Mammary epithelial cell (primary cell): ENCODE measurements at regions of chr17 and their contacts with region 1.

Region 1: DNA sequence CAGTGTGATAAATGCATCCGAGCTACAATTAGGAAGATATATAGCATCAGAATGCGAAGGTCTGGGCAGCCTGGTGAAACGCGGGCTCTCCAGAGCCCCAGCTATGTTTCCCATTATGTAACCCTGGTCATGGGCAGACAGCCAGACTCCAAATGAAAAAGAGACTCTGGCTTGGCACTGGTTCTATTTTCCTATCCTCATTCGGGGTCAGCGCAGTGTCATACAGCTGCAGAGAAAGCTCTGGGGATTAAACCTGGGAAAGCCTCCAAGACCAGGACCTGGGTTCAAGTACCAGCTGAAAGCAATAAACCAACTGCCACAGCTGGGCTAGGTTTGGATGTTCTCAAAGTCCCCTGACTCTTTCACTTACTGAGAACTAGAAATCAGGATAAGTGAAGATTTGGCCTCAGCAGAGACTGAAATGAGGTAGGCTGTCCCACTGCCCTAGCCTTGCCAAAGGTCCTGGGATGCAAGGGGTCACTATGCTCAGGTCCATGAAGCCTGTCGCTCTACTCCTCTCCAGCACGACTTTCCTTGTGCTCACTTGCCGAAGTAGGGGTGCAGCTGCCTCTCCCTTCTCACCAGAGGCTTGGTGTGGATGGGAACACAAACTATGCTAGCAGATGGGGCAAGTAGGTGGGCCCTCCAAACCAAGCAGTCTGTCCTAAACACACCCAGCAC is 123.8 kb downstream of the SMG6 start:
- DNase-seq: no peak
- H3K4me3 ChIP-seq: no peak overlapping the region
- H3K27ac ChIP-seq: no peak overlapping the region
- H3K4me1 ChIP-seq: peaks cover 42% of the 10 kb centered on the region
- H3K27me3 ChIP-seq: no peaks in the 10 kb centered on the region
- CTCF ChIP-seq: no peak

Region 2: GRCh38 chr17:2140683-2141082 is 39.1 kb before region 1 on chr17:
- CTCF ChIA-PET with region 1: no interaction called
- dilution Hi-C with region 1: loop called (anchors 5 kb)
- in situ Hi-C with region 1: no loop called
- intact Hi-C with region 1: no loop called
- DNase-seq: peak; percentile 32
- H3K4me3 ChIP-seq: no peak overlapping the region
- H3K27ac ChIP-seq: no peak overlapping the region
- H3K4me1 ChIP-seq: no peaks in the 10 kb centered on the region
- H3K27me3 ChIP-seq: no peaks in the 10 kb centered on the region
- CTCF ChIP-seq: no peak

Region 3: GRCh38 chr17:2215616-2216364 is 36.0 kb after region 1 on chr17:
- CTCF ChIA-PET with region 1: no interaction called
- dilution Hi-C with region 1: no loop called
- in situ Hi-C with region 1: no loop called
- intact Hi-C with region 1: loop called (anchors 5 kb)
- DNase-seq: no peak
- H3K4me3 ChIP-seq: no peak overlapping the region
- H3K27ac ChIP-seq: no peak overlapping the region
- H3K4me1 ChIP-seq: peaks cover 17% of the 10 kb centered on the region
- H3K27me3 ChIP-seq: no peaks in the 10 kb centered on the region
- CTCF ChIP-seq: no peak

Region 4: DNA sequence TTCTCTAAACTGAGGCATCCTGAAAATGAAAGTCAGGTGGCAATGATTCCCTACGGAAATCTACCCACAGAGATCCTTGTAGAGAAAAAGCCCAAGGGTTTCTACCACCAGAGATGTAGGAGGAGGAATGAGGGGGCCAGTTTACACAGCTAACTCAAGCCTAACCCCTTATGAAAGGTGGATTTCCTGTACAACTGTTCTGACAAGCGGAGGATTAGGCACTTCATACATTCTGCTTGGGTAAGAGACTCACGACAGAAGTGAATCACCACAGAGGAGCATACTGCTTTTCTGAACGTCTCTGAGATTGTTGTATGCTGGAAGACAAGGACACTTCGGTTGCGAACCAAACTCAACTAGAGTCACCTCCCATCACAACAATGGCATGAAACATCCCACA is 51.1 kb after region 1 on chr17:
- CTCF ChIA-PET with region 1: no interaction called
- dilution Hi-C with region 1: loop called (anchors 5 kb)
- in situ Hi-C with region 1: no loop called
- intact Hi-C with region 1: no loop called
- DNase-seq: no peak
- H3K4me3 ChIP-seq: no peak overlapping the region
- H3K27ac ChIP-seq: no peak overlapping the region
- H3K4me1 ChIP-seq: peaks cover 13% of the 10 kb centered on the region
- H3K27me3 ChIP-seq: no peaks in the 10 kb centered on the region
- CTCF ChIP-seq: no peak